H1 (cell line): ENCODE measurements at regions of chr11 and their contacts with region 1.

Region 1: GRCh38 chr11:72430741-72431570 is 3.4 kb downstream of the CLPB start:
- DNase-seq: no peak
- H3K4me3 ChIP-seq: no peak overlapping the region
- H3K27ac ChIP-seq: no peak overlapping the region
- H3K4me1 ChIP-seq: peaks cover 0 to 4% (median 1%) of the 10 kb centered on the region in 4 experiments; a peak in 2 of 7 replicates
- H3K27me3 ChIP-seq: no peaks in the 10 kb centered on the region
- CTCF ChIP-seq: peak; percentile 71 to 94 (median 89)
- EP300 ChIP-seq: no peak
- POLR2A ChIP-seq: no peak
- RAD21 ChIP-seq: peak; percentile 98

Region 2: GRCh38 chr11:72222907-72223614 is 207.9 kb before region 1 on chr11:
- CTCF ChIA-PET with region 1: interaction called, 15 read pairs
- POLR2A ChIA-PET with region 1: interaction called, 5 read pairs
- DNase-seq: peak; percentile 84 to 92
- H3K4me3 ChIP-seq: peak overlapping the region; percentile 67 to 89 (median 76)
- H3K27ac ChIP-seq: no peak overlapping the region
- H3K4me1 ChIP-seq: peaks cover 10 to 11% (median 11%) of the 10 kb centered on the region in 4 experiments; a peak in 6 of 7 replicates
- H3K27me3 ChIP-seq: no peaks in the 10 kb centered on the region; a peak in 2 of 7 replicates
- CTCF ChIP-seq: 0 out of 4 replicates have a peak, but pooled peaks of 1 of the 3 experiments have one; percentile 1
- EP300 ChIP-seq: peak in 1 of 2 experiments; percentile 42; a peak in 1 of 3 replicates
- POLR2A ChIP-seq: no peak
- RAD21 ChIP-seq: no peak; a peak in 1 of 4 replicates

Region 3: GRCh38 chr11:72293910-72294615 is 136.9 kb before region 1 on chr11:
- CTCF ChIA-PET with region 1: interaction called, 124 read pairs
- POLR2A ChIA-PET with region 1: no interaction called
- DNase-seq: peak in 1 of 2 experiments; percentile 34
- H3K4me3 ChIP-seq: no peak overlapping the region
- H3K27ac ChIP-seq: no peak overlapping the region
- H3K4me1 ChIP-seq: no peaks in the 10 kb centered on the region
- H3K27me3 ChIP-seq: no peaks in the 10 kb centered on the region
- CTCF ChIP-seq: no peak
- EP300 ChIP-seq: no peak
- POLR2A ChIP-seq: no peak
- RAD21 ChIP-seq: no peak

Region 4: GRCh38 chr11:72328366-72329224 is 102.4 kb before region 1 on chr11:
- CTCF ChIA-PET with region 1: interaction called, 99 read pairs
- POLR2A ChIA-PET with region 1: no interaction called
- DNase-seq: no peak
- H3K4me3 ChIP-seq: no peak overlapping the region
- H3K27ac ChIP-seq: no peak overlapping the region
- H3K4me1 ChIP-seq: peaks cover 2 to 6% (median 4%) of the 10 kb centered on the region in 4 experiments; a peak in 6 of 7 replicates
- H3K27me3 ChIP-seq: no peaks in the 10 kb centered on the region
- CTCF ChIP-seq: no peak; a peak in 1 of 4 replicates
- EP300 ChIP-seq: no peak
- POLR2A ChIP-seq: no peak
- RAD21 ChIP-seq: peak; percentile 13 to 45; a peak in 2 of 4 replicates

Region 5: GRCh38 chr11:72363112-72363511 is 67.8 kb before region 1 on chr11:
- CTCF ChIA-PET with region 1: interaction called, 128 read pairs
- POLR2A ChIA-PET with region 1: no interaction called
- DNase-seq: no peak
- H3K4me3 ChIP-seq: no peak overlapping the region
- H3K27ac ChIP-seq: no peak overlapping the region
- H3K4me1 ChIP-seq: no peaks in the 10 kb centered on the region
- H3K27me3 ChIP-seq: no peaks in the 10 kb centered on the region
- CTCF ChIP-seq: no peak
- EP300 ChIP-seq: no peak
- POLR2A ChIP-seq: no peak
- RAD21 ChIP-seq: no peak

Region 6: GRCh38 chr11:72446902-72447769 is 16.2 kb after region 1 on chr11:
- CTCF ChIA-PET with region 1: interaction called, 105 read pairs
- POLR2A ChIA-PET with region 1: no interaction called
- DNase-seq: no peak
- H3K4me3 ChIP-seq: no peak overlapping the region
- H3K27ac ChIP-seq: no peak overlapping the region
- H3K4me1 ChIP-seq: no peaks in the 10 kb centered on the region
- H3K27me3 ChIP-seq: no peaks in the 10 kb centered on the region
- CTCF ChIP-seq: peak in 2 of 3 experiments; percentile 76 to 94; a peak in 3 of 4 replicates
- EP300 ChIP-seq: no peak
- POLR2A ChIP-seq: no peak
- RAD21 ChIP-seq: peak; percentile 70 to 72

Region 7: GRCh38 chr11:72546866-72547265 is 115.9 kb after region 1 on chr11:
- CTCF ChIA-PET with region 1: no interaction called
- POLR2A ChIA-PET with region 1: no interaction called
- DNase-seq: no peak
- H3K4me3 ChIP-seq: no peak overlapping the region
- H3K27ac ChIP-seq: no peak overlapping the region
- H3K4me1 ChIP-seq: no peaks in the 10 kb centered on the region
- H3K27me3 ChIP-seq: no peaks in the 10 kb centered on the region
- CTCF ChIP-seq: no peak
- EP300 ChIP-seq: no peak
- POLR2A ChIP-seq: no peak
- RAD21 ChIP-seq: no peak